Common myeloid progenitor, CD34-positive (primary cell): ENCODE measurements at regions of chr10 and their contacts with region 1.

Region 1: DNA sequence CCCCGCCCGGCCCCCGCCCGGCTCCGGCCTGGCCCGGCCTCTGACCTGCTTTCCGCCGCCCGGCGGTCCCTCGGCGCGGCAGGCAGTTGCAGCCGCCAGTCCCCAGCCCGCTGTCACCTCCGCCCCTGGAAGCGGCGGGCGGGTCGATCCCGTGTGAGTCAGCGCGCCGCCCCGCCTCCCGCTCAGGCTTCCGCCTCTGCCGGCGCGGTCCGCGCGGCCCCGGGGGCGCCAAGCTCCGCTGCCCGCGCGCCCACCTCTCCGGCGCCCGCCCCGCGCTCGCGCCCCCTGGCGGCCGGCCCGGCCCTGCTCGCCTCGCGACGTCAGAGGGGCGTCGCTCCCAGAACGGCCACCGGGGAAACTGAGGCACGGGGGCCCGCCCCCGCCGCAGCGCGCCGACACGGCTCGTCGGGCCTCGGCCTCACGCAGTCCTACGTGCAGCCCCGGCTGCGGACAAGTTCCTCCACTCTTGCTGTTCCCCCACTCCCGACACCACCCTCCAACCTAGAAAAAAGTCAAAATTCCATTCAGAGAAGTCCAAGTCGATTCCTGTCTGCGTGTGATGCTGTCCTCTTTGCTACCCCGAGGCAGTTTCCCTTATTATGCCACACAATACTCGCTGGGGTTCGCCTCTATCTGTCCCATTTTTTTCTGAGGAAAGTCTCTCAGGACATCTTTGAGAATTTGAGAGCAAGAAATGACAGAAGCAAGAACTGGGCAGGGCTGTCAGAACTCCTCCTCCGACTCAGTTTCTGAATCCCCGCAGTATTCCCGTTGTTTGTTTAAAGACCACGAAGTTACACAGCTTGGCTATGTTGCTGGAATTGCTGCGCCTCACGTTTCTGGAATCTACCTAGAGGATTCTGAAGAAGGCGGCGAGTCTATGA is at the start of gene DNMBP:
- DNase-seq: peak; percentile 84 to 94 (median 93)
- H3K4me3 ChIP-seq: peak within 1 kb of the TSS; percentile 74 to 98 (median 85)
- H3K27ac ChIP-seq: peak within 1 kb of the TSS in 1 of 2 experiments; percentile 55
- H3K4me1 ChIP-seq: peaks cover 5 to 41% (median 17%) of the 10 kb centered on the region in 4 experiments
- H3K27me3 ChIP-seq: peaks cover 0 to 3% (median 0%) of the 10 kb centered on the region in 5 experiments

Region 2: DNA sequence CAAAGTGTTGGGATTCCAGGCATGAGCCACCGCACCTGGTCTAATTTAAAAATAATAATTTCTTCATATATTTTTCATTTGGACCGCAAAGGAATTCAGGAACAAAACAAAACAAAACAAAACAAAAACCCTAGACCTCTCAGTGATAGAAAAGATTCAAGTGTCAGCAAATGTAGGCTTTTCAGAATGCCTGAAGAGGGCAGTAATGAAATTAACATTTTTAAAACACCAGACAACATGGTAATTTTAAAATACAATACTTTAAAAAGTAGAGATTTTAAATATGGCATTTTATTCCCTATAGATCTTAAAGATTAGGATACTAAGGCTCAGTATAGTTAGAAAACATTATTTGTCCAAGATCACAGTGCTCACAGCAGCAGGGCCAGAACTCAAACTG is 36.8 kb before region 1 on chr10:
- CTCF ChIA-PET with region 1: interaction called, 10 read pairs
- POLR2A ChIA-PET with region 1: no interaction called
- DNase-seq: peak; percentile 8 to 17 (median 13)
- H3K4me3 ChIP-seq: no peak overlapping the region
- H3K27ac ChIP-seq: no peak overlapping the region
- H3K4me1 ChIP-seq: peaks cover 0 to 12% (median 3%) of the 10 kb centered on the region in 4 experiments
- H3K27me3 ChIP-seq: no peaks in the 10 kb centered on the region

Region 3: DNA sequence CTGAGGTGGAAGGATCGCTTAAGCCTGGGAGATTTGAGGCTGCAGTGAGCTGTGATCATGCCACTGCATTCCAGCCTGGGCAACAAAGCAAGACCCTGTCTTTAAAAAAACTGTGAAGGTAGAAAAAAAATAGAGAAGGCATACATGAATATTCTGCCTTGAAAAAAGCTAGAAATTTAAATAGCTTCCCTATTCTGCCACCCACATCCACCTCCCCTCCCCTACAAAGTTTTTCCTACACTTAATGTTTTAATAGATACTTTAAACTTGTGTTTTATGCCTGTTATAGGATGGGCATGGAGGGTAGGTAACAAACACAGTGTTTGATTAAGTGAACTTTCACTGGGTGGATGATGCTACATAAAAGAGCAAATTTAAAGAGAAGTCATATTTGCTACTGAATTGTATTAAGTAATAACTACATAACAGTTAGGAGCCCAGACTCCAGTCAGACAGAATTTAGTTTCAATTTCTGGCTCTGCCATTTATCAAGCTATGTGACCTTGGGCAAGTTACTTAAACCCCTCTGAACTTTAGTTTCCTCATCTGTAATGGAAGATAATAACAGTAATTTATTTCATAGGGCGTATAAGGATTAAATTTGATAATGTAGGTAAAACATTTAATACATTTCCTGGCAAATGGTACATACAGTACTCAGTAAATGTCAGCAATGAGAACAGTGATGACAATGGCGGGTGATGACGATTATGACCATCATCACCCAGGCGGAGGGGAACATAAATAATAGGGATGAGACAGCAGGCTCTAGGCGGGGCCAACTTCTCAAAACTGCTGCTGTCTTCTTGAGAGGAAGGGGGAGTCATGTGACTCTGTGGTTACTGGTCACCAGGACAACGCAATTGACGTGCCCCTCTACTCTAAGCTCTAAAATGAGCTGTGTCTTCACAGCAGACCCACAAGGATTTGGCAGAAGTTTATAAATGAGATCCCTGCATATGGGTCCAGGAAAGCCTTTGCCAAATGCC is 16.0 kb before region 1 on chr10:
- CTCF ChIA-PET with region 1: interaction called, 55 read pairs
- POLR2A ChIA-PET with region 1: interaction called, 3 read pairs
- DNase-seq: peak; percentile 94 to 98 (median 98)
- H3K4me3 ChIP-seq: peak overlapping the region in 4 of 7 experiments; percentile 35 to 65 (median 42)
- H3K27ac ChIP-seq: peak overlapping the region; percentile 35 to 78
- H3K4me1 ChIP-seq: peaks cover 13 to 26% (median 19%) of the 10 kb centered on the region in 4 experiments
- H3K27me3 ChIP-seq: no peaks in the 10 kb centered on the region